Activated CD4-positive, alpha-beta memory T cell treated with anti-CD3 and anti-CD28 coated beads, Interleukin-2, amount 10 ng/mL, durations not matched to agents 7 days and 5 days (primary cell): ENCODE measurements at regions of chr6 and their contacts with region 1.

Region 1: GRCh38 chr6:108862479-108863191 is 14.4 kb downstream of the ARMC2 start:
- DNase-seq: no peak
- H3K4me3 Mint-ChIP-seq: no peak overlapping the region
- H3K27ac Mint-ChIP-seq: no peak overlapping the region
- H3K4me1 Mint-ChIP-seq: peaks cover 36% of the 10 kb centered on the region
- H3K27me3 Mint-ChIP-seq: no peaks in the 10 kb centered on the region

Region 2: DNA sequence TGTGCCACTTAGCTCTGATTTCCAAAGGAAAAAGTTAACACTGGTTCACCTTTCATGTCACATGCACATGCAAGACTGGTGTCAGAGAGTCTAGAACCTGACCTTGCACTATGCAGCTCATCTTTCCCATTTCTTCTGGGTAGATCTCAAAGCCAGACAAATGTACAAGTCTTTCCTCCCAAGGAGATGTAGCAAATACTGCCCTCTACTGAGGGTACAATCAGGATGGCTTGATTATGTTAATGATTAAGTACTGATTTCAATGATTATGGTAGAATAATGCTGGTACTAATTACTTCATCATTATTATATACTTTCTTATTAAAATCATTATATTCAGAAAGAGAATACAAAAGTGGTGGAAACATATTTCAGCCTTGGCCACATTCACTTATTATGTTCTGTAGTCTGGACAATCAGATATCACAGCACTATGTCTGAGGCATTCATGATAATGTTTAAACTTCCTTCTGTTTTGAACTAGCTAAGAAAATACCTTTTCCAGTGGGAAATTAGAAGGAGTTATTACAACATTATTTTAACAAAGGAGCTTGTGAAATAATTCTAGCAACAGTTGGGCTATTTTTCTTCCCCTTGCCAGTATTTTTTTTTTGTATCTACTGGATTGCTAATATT is 370.4 kb before region 1 on chr6:
- CTCF ChIA-PET with region 1: no interaction called
- POLR2A ChIA-PET with region 1: no interaction called
- DNase-seq: no peak
- H3K4me3 Mint-ChIP-seq: no peak overlapping the region
- H3K27ac Mint-ChIP-seq: no peak overlapping the region
- H3K4me1 Mint-ChIP-seq: no peaks in the 10 kb centered on the region
- H3K27me3 Mint-ChIP-seq: peaks cover 3% of the 10 kb centered on the region

Region 3: DNA sequence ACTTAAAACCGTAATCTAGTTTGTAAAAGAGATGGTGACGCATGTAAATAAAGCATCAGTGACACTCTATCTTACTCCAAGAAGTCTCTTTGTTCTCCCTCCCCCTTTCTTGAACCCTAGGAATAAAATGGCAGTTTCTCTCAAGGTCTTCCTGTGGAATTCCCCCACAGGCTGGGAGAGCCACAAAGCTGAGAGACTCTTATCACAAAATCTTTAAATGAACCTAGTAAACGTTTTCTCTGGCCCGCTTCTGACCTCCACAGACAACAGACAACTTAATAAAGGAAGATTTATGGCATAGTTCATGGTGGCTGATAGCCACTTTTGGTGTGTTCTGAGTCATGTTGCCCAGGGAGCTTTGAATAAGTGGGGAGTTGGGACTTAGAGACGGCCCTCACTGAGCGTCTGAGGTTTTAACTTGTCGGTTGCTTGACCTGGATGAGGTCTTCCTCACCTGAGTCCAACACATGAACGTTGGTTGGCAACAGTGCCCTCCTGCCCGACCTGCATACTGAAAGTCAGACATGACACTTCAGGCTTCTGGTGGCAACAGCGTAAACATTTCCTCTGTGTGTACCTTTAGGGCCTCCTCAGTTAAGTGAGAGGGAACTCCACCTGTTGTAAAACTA is 177.8 kb before region 1 on chr6:
- CTCF ChIA-PET with region 1: no interaction called
- POLR2A ChIA-PET with region 1: no interaction called
- DNase-seq: no peak
- H3K4me3 Mint-ChIP-seq: no peak overlapping the region
- H3K27ac Mint-ChIP-seq: no peak overlapping the region
- H3K4me1 Mint-ChIP-seq: peaks cover 17% of the 10 kb centered on the region
- H3K27me3 Mint-ChIP-seq: no peaks in the 10 kb centered on the region

Region 4: DNA sequence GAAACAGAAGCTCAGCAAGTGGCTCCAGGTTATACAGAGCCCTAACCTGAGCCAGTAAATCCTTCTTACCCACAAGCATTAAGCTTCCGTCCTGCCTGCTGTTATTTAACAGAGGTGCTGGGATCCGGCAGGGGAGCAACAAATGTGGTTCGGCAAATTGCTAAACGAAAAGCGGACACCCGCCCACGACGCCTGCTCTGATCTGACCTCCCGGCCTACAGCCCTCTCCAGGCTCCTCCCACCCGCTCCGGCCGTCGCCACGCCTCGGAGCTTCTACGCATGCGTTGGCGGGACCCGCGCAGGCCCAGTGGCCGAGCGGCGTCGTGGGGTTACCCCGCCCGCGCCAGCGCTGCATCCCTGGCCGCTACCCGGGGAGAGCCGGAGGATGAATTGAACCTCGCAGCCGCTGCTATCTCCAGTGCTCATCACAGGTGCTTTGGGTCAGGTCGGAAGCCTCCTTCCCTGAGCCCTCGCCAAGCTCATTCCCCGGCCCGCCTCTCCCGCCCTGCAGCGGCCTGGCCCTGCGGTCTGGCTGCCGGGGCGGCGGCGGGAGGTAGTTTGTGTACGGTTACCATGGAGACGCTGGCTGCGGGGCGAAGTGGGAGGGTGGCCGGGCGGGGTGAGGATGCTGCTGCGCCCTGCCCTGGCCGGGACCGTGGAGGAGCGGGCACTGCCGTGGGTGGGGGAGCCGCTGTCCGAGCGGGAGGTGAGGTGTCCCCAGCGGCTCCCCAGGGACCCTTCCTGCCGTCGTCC is 14.3 kb before region 1 on chr6 and contains the start of gene ARMC2:
- CTCF ChIA-PET with region 1: interaction called, 13 read pairs
- POLR2A ChIA-PET with region 1: interaction called, 4 read pairs
- DNase-seq: peak; percentile 89
- H3K4me3 Mint-ChIP-seq: peak within 1 kb of the TSS; percentile 77
- H3K27ac Mint-ChIP-seq: peak within 1 kb of the TSS; percentile 70
- H3K4me1 Mint-ChIP-seq: peaks cover 34% of the 10 kb centered on the region
- H3K27me3 Mint-ChIP-seq: no peaks in the 10 kb centered on the region
- total RNA-seq, gene ARMC2: 12.2 to 13.6 TPM

Region 5: GRCh38 chr6:108874470-108875160 is 12.0 kb after region 1 on chr6:
- CTCF ChIA-PET with region 1: interaction called, 18 read pairs
- POLR2A ChIA-PET with region 1: interaction called, 14 read pairs
- DNase-seq: peak; percentile 75
- H3K4me3 Mint-ChIP-seq: peak overlapping the region; percentile 75
- H3K27ac Mint-ChIP-seq: peak overlapping the region; percentile 100
- H3K4me1 Mint-ChIP-seq: peaks cover 74% of the 10 kb centered on the region
- H3K27me3 Mint-ChIP-seq: peaks cover 8% of the 10 kb centered on the region

Region 6: DNA sequence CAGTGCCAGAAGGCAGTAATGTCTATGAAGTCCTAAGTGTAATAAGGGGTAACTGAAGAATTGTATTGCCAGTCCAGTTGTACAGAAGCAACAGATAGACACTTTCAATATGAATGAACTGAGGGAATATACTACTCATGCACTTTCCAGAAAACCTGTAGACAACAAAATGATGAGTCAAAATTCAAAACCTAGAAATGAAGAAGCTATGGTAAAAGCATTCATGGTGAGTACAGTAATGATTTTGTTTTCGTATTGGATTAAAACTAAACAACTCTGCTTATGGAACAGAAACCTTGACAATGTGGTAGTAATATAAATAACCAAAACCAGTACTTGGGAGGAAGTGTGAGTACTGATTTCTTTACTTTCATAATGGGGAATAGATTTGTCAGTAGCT is 20.5 kb after region 1 on chr6:
- CTCF ChIA-PET with region 1: interaction called, 15 read pairs
- POLR2A ChIA-PET with region 1: interaction called, 14 read pairs
- DNase-seq: no peak
- H3K4me3 Mint-ChIP-seq: no peak overlapping the region
- H3K27ac Mint-ChIP-seq: peak overlapping the region; percentile 80
- H3K4me1 Mint-ChIP-seq: peaks cover 54% of the 10 kb centered on the region
- H3K27me3 Mint-ChIP-seq: peaks cover 10% of the 10 kb centered on the region

Region 7: GRCh38 chr6:108966855-108967755 is 104.5 kb after region 1 on chr6:
- CTCF ChIA-PET with region 1: no interaction called
- POLR2A ChIA-PET with region 1: no interaction called
- DNase-seq: peak; percentile 40
- H3K4me3 Mint-ChIP-seq: no peak overlapping the region
- H3K27ac Mint-ChIP-seq: no peak overlapping the region
- H3K4me1 Mint-ChIP-seq: peaks cover 19% of the 10 kb centered on the region
- H3K27me3 Mint-ChIP-seq: no peaks in the 10 kb centered on the region

Region 8: DNA sequence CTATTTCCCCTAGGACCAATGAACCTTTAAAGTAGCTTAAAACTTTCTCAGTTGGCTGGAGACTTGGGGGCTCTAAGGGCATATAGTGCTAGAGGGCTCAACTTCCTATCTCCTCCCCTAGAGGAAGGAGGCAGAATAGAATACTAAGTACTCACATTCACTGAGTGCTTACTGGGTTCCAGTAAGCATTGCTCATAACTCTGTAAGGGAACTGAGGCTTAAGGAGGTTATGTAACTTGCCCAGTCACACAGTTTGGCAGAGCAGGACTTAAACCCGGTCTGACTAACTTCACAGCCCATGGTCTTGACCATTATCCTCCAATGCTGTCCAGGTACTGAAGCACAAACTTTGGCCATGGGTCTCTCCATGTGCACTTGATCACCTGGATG is 219.5 kb after region 1 on chr6:
- CTCF ChIA-PET with region 1: no interaction called
- POLR2A ChIA-PET with region 1: no interaction called
- DNase-seq: no peak
- H3K4me3 Mint-ChIP-seq: no peak overlapping the region
- H3K27ac Mint-ChIP-seq: no peak overlapping the region
- H3K4me1 Mint-ChIP-seq: peaks cover under 1% of the 10 kb centered on the region
- H3K27me3 Mint-ChIP-seq: no peaks in the 10 kb centered on the region